ENCODE measurements at regions of chr10 and their contacts with region 1.

Region 1: GRCh38 chr10:80444646-80445319 is 9.3 kb upstream of the TSPAN14 start:
- DNase-seq: peak; percentile 66
- H3K4me3 Mint-ChIP-seq: no peak overlapping the region
- H3K27ac Mint-ChIP-seq: no peak overlapping the region
- H3K4me1 Mint-ChIP-seq: peaks cover 10% of the 10 kb centered on the region
- H3K27me3 Mint-ChIP-seq: no peaks in the 10 kb centered on the region
- CTCF ChIP-seq: peak; percentile 77

Region 2: GRCh38 chr10:80315391-80315790 is 129.4 kb before region 1 on chr10:
- CTCF ChIA-PET with region 1: no interaction called
- POLR2A ChIA-PET with region 1: no interaction called
- intact Hi-C with region 1: no loop called
- DNase-seq: no peak
- H3K4me3 Mint-ChIP-seq: no peak overlapping the region
- H3K27ac Mint-ChIP-seq: no peak overlapping the region
- H3K4me1 Mint-ChIP-seq: no peaks in the 10 kb centered on the region
- H3K27me3 Mint-ChIP-seq: no peaks in the 10 kb centered on the region
- CTCF ChIP-seq: no peak

Region 3: GRCh38 chr10:80392276-80392675 is 52.5 kb before region 1 on chr10:
- CTCF ChIA-PET with region 1: interaction called, 219 read pairs
- POLR2A ChIA-PET with region 1: no interaction called
- intact Hi-C with region 1: no loop called
- DNase-seq: peak; percentile 82
- H3K4me3 Mint-ChIP-seq: peak overlapping the region; percentile 1
- H3K27ac Mint-ChIP-seq: peak overlapping the region; percentile 88
- H3K4me1 Mint-ChIP-seq: peaks cover 11% of the 10 kb centered on the region
- H3K27me3 Mint-ChIP-seq: no peaks in the 10 kb centered on the region
- CTCF ChIP-seq: no peak

Region 4: DNA sequence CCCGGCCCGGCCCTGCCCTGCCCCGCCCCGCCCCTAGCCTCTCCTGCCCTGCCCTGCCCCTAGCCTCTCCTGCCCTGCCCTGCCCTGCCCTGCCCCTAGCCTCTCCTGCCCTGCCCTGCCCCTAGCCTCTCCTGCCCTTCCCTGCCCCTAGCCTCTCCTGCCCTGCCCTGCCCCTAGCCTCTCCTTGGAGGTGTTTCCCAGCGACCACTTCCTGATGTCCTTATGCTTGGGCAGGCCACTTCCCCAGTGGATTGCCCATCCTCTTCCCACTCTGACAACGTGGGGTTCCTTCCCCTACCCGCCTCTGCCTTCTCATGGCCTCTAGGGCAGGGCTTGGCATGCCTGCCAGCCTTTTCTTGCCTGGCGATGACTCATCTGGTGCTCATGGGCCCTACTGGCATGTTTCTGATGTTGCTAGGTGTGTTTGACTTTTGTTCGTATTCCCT is 15.2 kb before region 1 on chr10:
- CTCF ChIA-PET with region 1: interaction called, 57 read pairs
- POLR2A ChIA-PET with region 1: interaction called, 4 read pairs
- intact Hi-C with region 1: no loop called
- DNase-seq: peak; percentile 95
- H3K4me3 Mint-ChIP-seq: peak overlapping the region; percentile 12
- H3K27ac Mint-ChIP-seq: peak overlapping the region; percentile 94
- H3K4me1 Mint-ChIP-seq: peaks cover 12% of the 10 kb centered on the region
- H3K27me3 Mint-ChIP-seq: no peaks in the 10 kb centered on the region
- CTCF ChIP-seq: no peak

Region 5: DNA sequence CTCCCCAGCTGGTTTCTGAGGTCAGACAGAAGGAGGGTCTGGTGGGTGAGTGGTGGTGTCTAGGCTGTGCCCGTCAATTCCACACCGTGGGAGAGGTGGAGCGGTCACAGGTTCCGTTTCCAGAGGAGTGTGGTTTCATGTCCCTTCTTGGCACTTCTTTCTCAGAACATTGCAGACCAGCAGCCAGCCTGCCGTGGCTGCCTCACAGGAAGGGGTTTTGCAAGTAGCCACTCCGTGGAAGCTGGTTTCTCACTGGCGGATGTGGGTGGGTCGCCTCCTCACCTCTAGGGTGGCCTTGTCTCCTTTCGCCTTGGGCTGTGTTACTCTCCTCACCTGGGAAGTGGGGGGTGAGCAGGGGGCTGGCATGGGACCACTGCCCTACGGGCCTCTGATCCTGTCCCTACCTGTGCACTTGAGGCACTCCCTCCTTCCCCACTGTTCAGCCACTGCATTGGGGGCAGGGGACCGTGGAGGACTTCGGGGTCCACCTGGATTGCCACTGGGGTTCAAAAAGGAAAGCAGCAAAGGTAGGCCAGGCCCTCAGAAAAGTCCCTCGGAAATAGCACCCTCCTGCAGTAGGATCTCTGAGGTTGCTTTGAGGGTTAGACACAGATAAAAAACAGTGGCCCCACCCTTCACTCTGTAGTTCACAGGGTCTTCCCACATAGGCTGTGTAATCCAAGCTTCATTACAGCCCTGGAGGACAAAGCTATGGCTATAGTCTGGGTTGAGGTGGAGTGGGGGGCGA is 43.2 kb after region 1 on chr10:
- CTCF ChIA-PET with region 1: interaction called, 36 read pairs
- POLR2A ChIA-PET with region 1: no interaction called
- intact Hi-C with region 1: no loop called
- DNase-seq: no peak
- H3K4me3 Mint-ChIP-seq: no peak overlapping the region
- H3K27ac Mint-ChIP-seq: peak overlapping the region; percentile 90
- H3K4me1 Mint-ChIP-seq: peaks cover 45% of the 10 kb centered on the region
- H3K27me3 Mint-ChIP-seq: no peaks in the 10 kb centered on the region
- CTCF ChIP-seq: no peak

Region 6: GRCh38 chr10:80530251-80530650 is 85.5 kb after region 1 on chr10:
- CTCF ChIA-PET with region 1: interaction called, 8 read pairs
- POLR2A ChIA-PET with region 1: no interaction called
- intact Hi-C with region 1: loop called (anchors 1 kb)
- DNase-seq: peak; percentile 72
- H3K4me3 Mint-ChIP-seq: no peak overlapping the region
- H3K27ac Mint-ChIP-seq: no peak overlapping the region
- H3K4me1 Mint-ChIP-seq: no peaks in the 10 kb centered on the region
- H3K27me3 Mint-ChIP-seq: no peaks in the 10 kb centered on the region
- CTCF ChIP-seq: no peak

Region 7: DNA sequence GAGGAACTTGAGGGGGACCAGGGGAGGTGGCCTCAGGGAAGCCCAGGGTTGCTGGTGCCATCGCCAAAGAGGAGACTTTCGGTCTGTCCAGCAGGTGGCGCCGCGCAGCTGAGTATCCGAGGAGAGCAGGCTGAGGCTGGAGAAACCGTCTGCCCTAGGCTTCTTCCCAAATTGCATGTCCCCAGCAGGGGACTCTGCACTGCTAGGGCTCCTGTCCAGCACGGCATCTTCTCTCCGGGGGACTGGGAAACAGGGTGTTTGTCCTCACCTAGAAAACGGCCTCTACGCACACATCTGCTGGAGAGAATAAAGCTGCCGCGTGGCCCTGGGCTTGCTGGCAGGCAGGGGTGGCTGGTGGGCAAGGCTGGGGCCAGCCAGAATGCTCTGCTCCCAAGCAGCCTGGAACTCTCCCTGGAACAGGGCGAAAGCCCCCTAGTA is 254.8 kb after region 1 on chr10:
- CTCF ChIA-PET with region 1: interaction called, 9 read pairs
- POLR2A ChIA-PET with region 1: no interaction called
- intact Hi-C with region 1: loop called (anchors 2 kb)
- DNase-seq: peak; percentile 79
- H3K4me3 Mint-ChIP-seq: no peak overlapping the region
- H3K27ac Mint-ChIP-seq: no peak overlapping the region
- H3K4me1 Mint-ChIP-seq: no peaks in the 10 kb centered on the region
- H3K27me3 Mint-ChIP-seq: peaks cover 47% of the 10 kb centered on the region
- CTCF ChIP-seq: peak; percentile 80

Region 8: GRCh38 chr10:81270051-81270450 is 825.3 kb after region 1 on chr10:
- CTCF ChIA-PET with region 1: no interaction called
- POLR2A ChIA-PET with region 1: no interaction called
- intact Hi-C with region 1: no loop called
- DNase-seq: no peak
- H3K4me3 Mint-ChIP-seq: no peak overlapping the region
- H3K27ac Mint-ChIP-seq: no peak overlapping the region
- H3K4me1 Mint-ChIP-seq: no peaks in the 10 kb centered on the region
- H3K27me3 Mint-ChIP-seq: peaks cover 69% of the 10 kb centered on the region
- CTCF ChIP-seq: no peak

Measured in MCF 10A (cell line).